Activated CD4-positive, alpha-beta memory T cell treated with anti-CD3 and anti-CD28 coated beads, Interleukin-2, amount 10 ng/mL, durations not matched to agents 7 days and 5 days (primary cell): ENCODE measurements at regions of chr3 and their contacts with region 1.

Region 1: GRCh38 chr3:119498186-119498987 is at the start of gene TIMMDC1:
- DNase-seq: peak; percentile 98
- H3K4me3 Mint-ChIP-seq: peak within 1 kb of the TSS; percentile 99
- H3K27ac Mint-ChIP-seq: peak within 1 kb of the TSS; percentile 96
- H3K4me1 Mint-ChIP-seq: peaks cover 45% of the 10 kb centered on the region
- H3K27me3 Mint-ChIP-seq: no peaks in the 10 kb centered on the region
- total RNA-seq, gene TIMMDC1: 66.4 to 67.4 TPM

Region 2: GRCh38 chr3:119469381-119470189 is 28.8 kb before region 1 on chr3:
- CTCF ChIA-PET with region 1: interaction called, 12 read pairs
- POLR2A ChIA-PET with region 1: interaction called, 235 read pairs
- DNase-seq: no peak
- H3K4me3 Mint-ChIP-seq: peak overlapping the region; percentile 95
- H3K27ac Mint-ChIP-seq: peak overlapping the region; percentile 71
- H3K4me1 Mint-ChIP-seq: peaks cover 38% of the 10 kb centered on the region
- H3K27me3 Mint-ChIP-seq: no peaks in the 10 kb centered on the region